ENCODE measurements at regions of chr4 and their contacts with region 1.

Region 1: DNA sequence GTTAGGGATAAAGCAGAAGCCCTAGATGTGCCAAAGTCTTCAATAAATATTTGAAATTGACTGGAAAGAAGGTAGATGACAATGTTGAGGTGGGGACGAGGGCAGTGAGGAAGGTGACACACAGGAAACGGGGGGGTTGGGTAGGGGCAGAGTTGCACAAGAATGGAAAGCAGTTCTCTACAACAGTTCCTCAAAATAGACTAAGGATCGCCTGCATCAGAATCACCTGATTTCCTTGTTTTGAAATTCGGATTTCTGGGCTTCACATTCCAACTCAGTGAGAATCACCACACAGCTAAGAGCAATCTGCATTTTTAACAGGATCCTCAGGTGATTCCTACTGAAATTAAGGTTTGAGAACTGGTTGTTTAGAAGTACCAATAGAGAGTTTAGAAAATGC is 70.6 kb downstream of the ARFIP1 start:
- DNase-seq: no peak
- H3K4me3 ChIP-seq: no peak overlapping the region
- H3K27ac ChIP-seq: no peak overlapping the region
- H3K4me1 ChIP-seq: no peaks in the 10 kb centered on the region
- H3K27me3 ChIP-seq: no peaks in the 10 kb centered on the region
- CTCF ChIP-seq: no peak

Region 2: GRCh38 chr4:153083447-153083947 is 233.1 kb after region 1 on chr4:
- intact Hi-C with region 1: loop called (anchors 5 kb)
- DNase-seq: peak in 1 of 2 donors; percentile 78
- H3K4me3 ChIP-seq: no peak overlapping the region
- H3K27ac ChIP-seq: no peak overlapping the region
- H3K4me1 ChIP-seq: peaks cover 0 to 6% of the 10 kb centered on the region in 2 donors
- H3K27me3 ChIP-seq: no peaks in the 10 kb centered on the region
- CTCF ChIP-seq: peak; percentile 56 to 76 (median 58)

Region 3: GRCh38 chr4:153127760-153128494 is 277.6 kb after region 1 on chr4:
- intact Hi-C with region 1: loop called (anchors 2 kb)
- DNase-seq: peak in 1 of 2 donors; percentile 93
- H3K4me3 ChIP-seq: peak overlapping the region in 1 of 2 donors; percentile 29
- H3K27ac ChIP-seq: no peak overlapping the region
- H3K4me1 ChIP-seq: peaks cover 0 to 4% of the 10 kb centered on the region in 2 donors
- H3K27me3 ChIP-seq: no peaks in the 10 kb centered on the region
- CTCF ChIP-seq: peak; percentile 75 to 88 (median 82)